ENCODE measurements at regions of chr12 and their contacts with region 1.

Region 1: GRCh38 chr12:58206876-58207275 is 265.5 kb downstream of the ATP23 start:
- DNase-seq: no peak
- ATAC-seq: no peak
- H3K4me3 ChIP-seq: no peak overlapping the region
- H3K27ac ChIP-seq: no peak overlapping the region
- H3K4me1 ChIP-seq: no peaks in the 10 kb centered on the region
- H3K27me3 ChIP-seq: no peaks in the 10 kb centered on the region
- CTCF ChIP-seq: no peak

Region 2: GRCh38 chr12:59675461-59675860 is 1468.6 kb after region 1 on chr12:
- CTCF ChIA-PET with region 1: no interaction called
- POLR2A ChIA-PET with region 1: interaction called, 12 read pairs
- intact Hi-C with region 1: no loop called
- DNase-seq: no peak
- ATAC-seq: no peak
- H3K4me3 ChIP-seq: no peak overlapping the region
- H3K27ac ChIP-seq: no peak overlapping the region
- H3K4me1 ChIP-seq: no peaks in the 10 kb centered on the region
- H3K27me3 ChIP-seq: no peaks in the 10 kb centered on the region
- CTCF ChIP-seq: no peak